CD4-positive, alpha-beta T cell (primary cell): ENCODE measurements at regions of chr5 and their contacts with region 1.

Region 1: DNA sequence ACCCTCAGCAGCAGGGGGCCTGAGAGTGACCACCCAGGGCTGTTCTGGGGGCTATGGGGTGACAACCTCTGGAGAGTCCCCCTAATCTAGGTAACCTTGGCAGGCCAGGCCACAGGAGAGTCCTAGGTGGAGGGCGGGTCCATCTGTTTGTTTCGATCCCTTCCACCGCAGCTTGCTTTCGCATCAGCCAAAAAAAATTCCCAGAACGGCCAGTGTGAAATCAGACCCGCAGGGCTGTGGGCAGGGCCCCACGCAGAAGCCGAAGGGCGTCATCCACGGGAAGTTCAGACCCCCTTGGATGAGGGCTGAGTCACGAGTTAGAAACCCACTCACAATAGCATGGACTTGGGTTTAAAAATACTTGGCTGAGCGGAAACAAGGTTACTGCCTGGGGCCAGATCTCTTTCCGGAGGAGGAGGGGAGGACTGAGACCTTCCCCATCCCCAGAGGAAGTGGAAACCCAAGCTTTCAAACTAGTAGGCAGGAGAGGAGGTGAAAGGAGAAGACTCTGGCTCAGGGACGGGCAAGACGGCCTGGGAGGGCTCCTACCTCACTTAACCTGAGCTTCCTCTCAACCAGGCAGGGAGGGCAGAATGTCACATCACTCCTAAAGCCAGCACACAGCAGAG is 8.5 kb downstream of the STK10 start:
- DNase-seq: peak in 9 of 14 experiments; percentile 23 to 83 (median 41)
- ATAC-seq: peak; percentile 1
- H3K4me3 ChIP-seq: peak overlapping the region; percentile 57
- H3K4me3 Mint-ChIP-seq: peak overlapping the region; percentile 91
- H3K27ac ChIP-seq: peak overlapping the region; percentile 97 to 98
- H3K27ac Mint-ChIP-seq: peak overlapping the region; percentile 98
- H3K4me1 ChIP-seq: peaks cover 99% of the 10 kb centered on the region
- H3K4me1 Mint-ChIP-seq: peaks cover 93% of the 10 kb centered on the region
- H3K27me3 ChIP-seq: no peaks in the 10 kb centered on the region
- H3K27me3 Mint-ChIP-seq: no peaks in the 10 kb centered on the region
- CTCF ChIP-seq: no peak

Region 2: DNA sequence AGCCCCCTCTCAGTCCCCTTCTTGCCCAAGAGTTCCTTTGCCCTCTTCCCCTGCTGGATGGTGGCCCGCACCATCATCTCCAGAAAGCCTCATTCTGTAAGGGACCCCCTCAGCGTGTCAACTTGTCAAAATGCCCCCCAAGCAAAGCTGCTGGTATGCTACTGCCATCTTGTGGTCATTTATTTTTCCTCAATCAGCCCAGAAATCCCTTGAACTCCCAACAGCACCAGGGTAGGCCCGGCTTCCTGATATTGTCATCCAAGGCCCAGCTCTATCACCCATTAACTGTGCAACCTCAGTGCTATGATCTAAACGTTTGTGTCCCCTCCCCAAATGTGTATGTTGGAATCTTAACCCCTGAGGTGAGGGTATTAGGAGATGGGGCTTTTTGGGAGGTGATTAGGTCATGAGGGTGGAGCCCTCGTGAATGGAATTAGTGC is 119.8 kb before region 1 on chr5:
- CTCF ChIA-PET with region 1: interaction called, 3 read pairs
- POLR2A ChIA-PET with region 1: interaction called, 10 read pairs
- intact Hi-C with region 1: no loop called
- DNase-seq: peak in 3 of 14 experiments; percentile 23 to 48 (median 45)
- ATAC-seq: no peak
- H3K4me3 ChIP-seq: no peak overlapping the region
- H3K4me3 Mint-ChIP-seq: no peak overlapping the region
- H3K27ac ChIP-seq: peak overlapping the region in 1 of 2 donors; percentile 22
- H3K27ac Mint-ChIP-seq: peak overlapping the region; percentile 31
- H3K4me1 ChIP-seq: peaks cover 7% of the 10 kb centered on the region
- H3K4me1 Mint-ChIP-seq: peaks cover 59% of the 10 kb centered on the region
- H3K27me3 ChIP-seq: no peaks in the 10 kb centered on the region
- H3K27me3 Mint-ChIP-seq: no peaks in the 10 kb centered on the region
- CTCF ChIP-seq: peak; percentile 53

Region 3: GRCh38 chr5:172106511-172107356 is 72.7 kb before region 1 on chr5:
- CTCF ChIA-PET with region 1: no interaction called
- POLR2A ChIA-PET with region 1: interaction called, 54 read pairs
- intact Hi-C with region 1: no loop called
- DNase-seq: peak; percentile 52 to 82 (median 66)
- ATAC-seq: peak; percentile 22
- H3K4me3 ChIP-seq: no peak overlapping the region
- H3K4me3 Mint-ChIP-seq: peak overlapping the region; percentile 42
- H3K27ac ChIP-seq: peak overlapping the region in 1 of 2 donors; percentile 5
- H3K27ac Mint-ChIP-seq: peak overlapping the region; percentile 81
- H3K4me1 ChIP-seq: peaks cover 49% of the 10 kb centered on the region
- H3K4me1 Mint-ChIP-seq: peaks cover 46% of the 10 kb centered on the region
- H3K27me3 ChIP-seq: no peaks in the 10 kb centered on the region
- H3K27me3 Mint-ChIP-seq: no peaks in the 10 kb centered on the region
- CTCF ChIP-seq: peak; percentile 98

Region 4: DNA sequence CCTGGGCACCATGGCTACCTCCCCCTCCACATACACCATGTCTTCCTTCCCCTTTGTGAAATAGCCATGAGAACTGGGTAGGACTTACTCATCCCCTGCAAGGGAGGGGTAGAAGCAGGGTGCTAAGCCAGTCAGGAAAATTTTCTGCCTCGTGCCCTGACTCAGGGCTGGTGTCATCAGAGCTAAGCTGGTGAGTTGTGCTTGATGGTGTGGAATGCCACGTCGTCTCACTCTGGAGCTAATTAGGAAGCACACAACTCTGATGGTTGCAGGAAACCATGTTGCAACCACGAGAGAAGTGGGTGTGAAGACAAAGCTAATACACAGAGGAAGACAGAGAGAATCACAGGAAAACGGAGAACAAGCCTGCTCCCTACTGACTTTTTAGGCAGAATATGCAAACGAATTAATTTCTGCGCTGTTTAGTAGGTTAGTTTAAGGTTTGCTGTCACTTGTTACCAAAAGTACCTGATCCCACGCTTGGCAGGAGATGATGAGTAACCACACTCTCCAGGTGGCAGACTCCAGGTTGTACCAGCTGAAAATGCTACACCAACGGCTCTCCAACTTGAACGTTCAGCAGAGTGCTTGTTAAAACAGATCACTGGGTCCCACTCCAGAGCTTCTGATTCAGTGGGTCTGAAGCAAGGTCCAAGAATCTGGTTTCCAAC is 46.0 kb before region 1 on chr5:
- CTCF ChIA-PET with region 1: no interaction called
- POLR2A ChIA-PET with region 1: interaction called, 12 read pairs
- intact Hi-C with region 1: no loop called
- DNase-seq: peak in 5 of 14 experiments; percentile 23 to 81 (median 65)
- ATAC-seq: peak; percentile 70
- H3K4me3 ChIP-seq: no peak overlapping the region
- H3K4me3 Mint-ChIP-seq: peak overlapping the region; percentile 58
- H3K27ac ChIP-seq: peak overlapping the region; percentile 42 to 44
- H3K27ac Mint-ChIP-seq: peak overlapping the region; percentile 66
- H3K4me1 ChIP-seq: peaks cover 62% of the 10 kb centered on the region
- H3K4me1 Mint-ChIP-seq: peaks cover 75% of the 10 kb centered on the region
- H3K27me3 ChIP-seq: no peaks in the 10 kb centered on the region
- H3K27me3 Mint-ChIP-seq: no peaks in the 10 kb centered on the region
- CTCF ChIP-seq: no peak

Region 5: GRCh38 chr5:172150514-172151425 is 28.7 kb before region 1 on chr5:
- CTCF ChIA-PET with region 1: interaction called, 5 read pairs
- POLR2A ChIA-PET with region 1: interaction called, 27 read pairs
- intact Hi-C with region 1: no loop called
- DNase-seq: peak in 5 of 14 experiments; percentile 14 to 69 (median 48)
- ATAC-seq: peak; percentile 62
- H3K4me3 ChIP-seq: peak overlapping the region; percentile 23
- H3K4me3 Mint-ChIP-seq: peak overlapping the region; percentile 25
- H3K27ac ChIP-seq: peak overlapping the region; percentile 73 to 76
- H3K27ac Mint-ChIP-seq: peak overlapping the region; percentile 93
- H3K4me1 ChIP-seq: peaks cover 87% of the 10 kb centered on the region
- H3K4me1 Mint-ChIP-seq: peaks cover 85% of the 10 kb centered on the region
- H3K27me3 ChIP-seq: no peaks in the 10 kb centered on the region
- H3K27me3 Mint-ChIP-seq: no peaks in the 10 kb centered on the region
- CTCF ChIP-seq: no peak

Region 6: GRCh38 chr5:172162323-172162986 is 17.0 kb before region 1 on chr5:
- CTCF ChIA-PET with region 1: interaction called, 4 read pairs
- POLR2A ChIA-PET with region 1: interaction called, 32 read pairs
- intact Hi-C with region 1: no loop called
- DNase-seq: no peak
- ATAC-seq: no peak
- H3K4me3 ChIP-seq: no peak overlapping the region
- H3K4me3 Mint-ChIP-seq: peak overlapping the region; percentile 70
- H3K27ac ChIP-seq: peak overlapping the region in 1 of 2 donors; percentile 15
- H3K27ac Mint-ChIP-seq: peak overlapping the region; percentile 59
- H3K4me1 ChIP-seq: peaks cover 88% of the 10 kb centered on the region
- H3K4me1 Mint-ChIP-seq: peaks cover 69% of the 10 kb centered on the region
- H3K27me3 ChIP-seq: no peaks in the 10 kb centered on the region
- H3K27me3 Mint-ChIP-seq: no peaks in the 10 kb centered on the region
- CTCF ChIP-seq: no peak

Region 7: GRCh38 chr5:172770675-172771438 is 591.4 kb after region 1 on chr5 and contains the start of gene DUSP1:
- CTCF ChIA-PET with region 1: no interaction called
- POLR2A ChIA-PET with region 1: interaction called, 11 read pairs
- intact Hi-C with region 1: loop called (anchors 10 kb)
- DNase-seq: peak; percentile 96 to 100 (median 98)
- ATAC-seq: peak; percentile 45
- H3K4me3 ChIP-seq: peak within 1 kb of the TSS; percentile 95
- H3K4me3 Mint-ChIP-seq: peak within 1 kb of the TSS; percentile 99
- H3K27ac ChIP-seq: peak within 1 kb of the TSS; percentile 100
- H3K27ac Mint-ChIP-seq: peak within 1 kb of the TSS; percentile 95
- H3K4me1 ChIP-seq: peaks cover 87% of the 10 kb centered on the region
- H3K4me1 Mint-ChIP-seq: peaks cover 78% of the 10 kb centered on the region
- H3K27me3 ChIP-seq: no peaks in the 10 kb centered on the region
- H3K27me3 Mint-ChIP-seq: peaks cover 6% of the 10 kb centered on the region
- CTCF ChIP-seq: peak; percentile 33
- total RNA-seq, gene DUSP1: 761 to 768 TPM